GM12878 (cell line): ENCODE measurements at regions of chr9 and their contacts with region 1.

Region 1: DNA sequence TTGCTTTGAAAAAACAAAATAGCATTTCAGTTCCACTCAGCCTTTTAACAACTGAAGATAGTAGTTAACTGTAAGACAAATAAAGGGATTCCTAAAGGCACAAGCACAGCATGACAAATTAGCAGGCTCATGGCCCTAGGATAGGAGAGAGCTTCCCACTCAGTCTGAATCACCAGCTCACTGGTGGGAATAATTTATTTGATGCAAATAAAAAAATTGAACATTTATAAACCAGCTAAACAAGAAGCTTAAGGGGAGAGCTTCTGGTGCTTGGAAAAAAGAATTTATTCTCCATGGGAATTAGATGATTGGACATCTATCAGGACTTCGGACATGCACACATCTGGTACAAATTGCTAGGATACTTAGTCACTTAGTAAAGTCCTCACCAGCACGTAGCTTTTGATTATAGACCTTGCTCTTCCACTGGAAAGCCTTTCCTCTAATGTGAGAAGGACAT is 294.1 kb upstream of the TNC start:
- DNase-seq: no peak
- ATAC-seq: no peak
- H3K4me3 ChIP-seq: no peak overlapping the region
- H3K27ac ChIP-seq: no peak overlapping the region
- H3K4me1 ChIP-seq: no peaks in the 10 kb centered on the region
- H3K27me3 ChIP-seq: no peaks in the 10 kb centered on the region
- CTCF ChIP-seq: no peak
- EP300 ChIP-seq: no peak
- POLR2A ChIP-seq: no peak
- RAD21 ChIP-seq: no peak

Region 2: GRCh38 chr9:114691046-114691955 is 720.7 kb before region 1 on chr9:
- CTCF ChIA-PET with region 1: no interaction called
- POLR2A ChIA-PET with region 1: no interaction called
- RAD21 ChIA-PET with region 1: no interaction called
- SMC1A ChIA-PET with region 1: no interaction called
- in situ Hi-C with region 1: no loop called
- intact Hi-C with region 1: loop called (anchors 10 kb)
- DNase-seq: peak; percentile 36
- ATAC-seq: peak; percentile 88
- H3K4me3 ChIP-seq: no peak overlapping the region
- H3K27ac ChIP-seq: no peak overlapping the region
- H3K4me1 ChIP-seq: peaks cover 21% of the 10 kb centered on the region
- H3K27me3 ChIP-seq: peaks cover 0 to 10% of the 10 kb centered on the region in 2 experiments; a peak in 2 of 4 replicates
- CTCF ChIP-seq: no peak
- EP300 ChIP-seq: peak; percentile 48 to 53; a peak in 2 of 4 replicates
- POLR2A ChIP-seq: no peak
- RAD21 ChIP-seq: no peak

Region 3: GRCh38 chr9:115204904-115205453 is 207.0 kb before region 1 on chr9:
- CTCF ChIA-PET with region 1: interaction called, 4 read pairs
- POLR2A ChIA-PET with region 1: no interaction called
- RAD21 ChIA-PET with region 1: interaction called, 3 read pairs
- SMC1A ChIA-PET with region 1: interaction called, 7 read pairs
- in situ Hi-C with region 1: no loop called
- intact Hi-C with region 1: loop called (anchors 5 kb)
- DNase-seq: no peak
- ATAC-seq: peak; percentile 72
- H3K4me3 ChIP-seq: no peak overlapping the region
- H3K27ac ChIP-seq: no peak overlapping the region
- H3K4me1 ChIP-seq: peaks cover 22% of the 10 kb centered on the region
- H3K27me3 ChIP-seq: no peaks in the 10 kb centered on the region
- CTCF ChIP-seq: no peak
- EP300 ChIP-seq: peak in 1 of 2 experiments; percentile 13; a peak in 1 of 4 replicates
- POLR2A ChIP-seq: no peak
- RAD21 ChIP-seq: no peak

Region 4: GRCh38 chr9:115211413-115212124 is 200.5 kb before region 1 on chr9:
- CTCF ChIA-PET with region 1: interaction called, 4 read pairs
- POLR2A ChIA-PET with region 1: interaction called, 3 read pairs
- RAD21 ChIA-PET with region 1: interaction called, 5 read pairs
- SMC1A ChIA-PET with region 1: interaction called, 10 read pairs
- in situ Hi-C with region 1: no loop called
- intact Hi-C with region 1: loop called (anchors 5 kb)
- DNase-seq: peak; percentile 68
- ATAC-seq: peak; percentile 76
- H3K4me3 ChIP-seq: no peak overlapping the region
- H3K27ac ChIP-seq: peak overlapping the region; percentile 64
- H3K4me1 ChIP-seq: peaks cover 41% of the 10 kb centered on the region
- H3K27me3 ChIP-seq: no peaks in the 10 kb centered on the region
- CTCF ChIP-seq: no peak
- EP300 ChIP-seq: peak in 1 of 2 experiments; percentile 43; a peak in 1 of 4 replicates
- POLR2A ChIP-seq: peak; percentile 42; the same call in 1 of the 2 replicates
- RAD21 ChIP-seq: peak; percentile 18; the same call in 1 of the 2 replicates

Region 5: DNA sequence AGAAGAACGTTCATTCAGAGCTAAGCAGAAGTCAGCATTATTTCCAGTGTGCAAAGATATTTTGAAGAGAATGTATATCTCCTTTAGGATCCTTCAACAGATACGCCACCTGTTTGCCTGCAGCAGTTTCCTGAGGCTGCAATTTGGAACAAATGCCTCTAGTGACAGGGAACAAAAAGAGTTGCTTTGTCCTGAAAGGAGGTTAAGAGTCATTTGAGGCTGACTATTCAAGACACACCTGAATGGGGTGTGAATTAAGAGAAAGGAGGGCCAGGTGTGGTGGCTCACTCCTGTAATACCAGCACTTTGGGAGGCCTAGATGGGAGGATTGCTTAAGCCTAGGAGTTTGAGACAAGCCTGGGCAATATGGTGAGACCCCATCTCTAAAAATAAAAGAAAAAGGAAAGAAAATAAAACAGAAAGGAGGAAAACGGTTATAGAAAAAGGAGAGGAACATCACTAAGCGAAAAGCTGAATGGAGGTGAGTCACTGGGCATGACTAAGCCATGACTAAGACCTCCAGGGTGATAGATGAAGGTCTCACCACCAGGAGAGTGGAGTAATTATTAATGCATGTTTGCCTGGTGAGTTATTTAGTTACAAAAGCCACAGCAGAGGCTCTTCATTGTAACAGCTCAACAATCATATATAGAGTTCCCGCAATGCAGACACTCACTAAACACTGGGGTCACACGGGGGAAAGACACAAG is 38.9 kb before region 1 on chr9:
- CTCF ChIA-PET with region 1: interaction called, 3 read pairs
- POLR2A ChIA-PET with region 1: no interaction called
- RAD21 ChIA-PET with region 1: interaction called, 5 read pairs
- SMC1A ChIA-PET with region 1: interaction called, 14 read pairs
- in situ Hi-C with region 1: no loop called
- intact Hi-C with region 1: no loop called
- DNase-seq: peak; percentile 16
- ATAC-seq: peak; percentile 90
- H3K4me3 ChIP-seq: no peak overlapping the region
- H3K27ac ChIP-seq: no peak overlapping the region
- H3K4me1 ChIP-seq: no peaks in the 10 kb centered on the region
- H3K27me3 ChIP-seq: no peaks in the 10 kb centered on the region
- CTCF ChIP-seq: no peak
- EP300 ChIP-seq: no peak
- POLR2A ChIP-seq: no peak
- RAD21 ChIP-seq: no peak

Region 6: DNA sequence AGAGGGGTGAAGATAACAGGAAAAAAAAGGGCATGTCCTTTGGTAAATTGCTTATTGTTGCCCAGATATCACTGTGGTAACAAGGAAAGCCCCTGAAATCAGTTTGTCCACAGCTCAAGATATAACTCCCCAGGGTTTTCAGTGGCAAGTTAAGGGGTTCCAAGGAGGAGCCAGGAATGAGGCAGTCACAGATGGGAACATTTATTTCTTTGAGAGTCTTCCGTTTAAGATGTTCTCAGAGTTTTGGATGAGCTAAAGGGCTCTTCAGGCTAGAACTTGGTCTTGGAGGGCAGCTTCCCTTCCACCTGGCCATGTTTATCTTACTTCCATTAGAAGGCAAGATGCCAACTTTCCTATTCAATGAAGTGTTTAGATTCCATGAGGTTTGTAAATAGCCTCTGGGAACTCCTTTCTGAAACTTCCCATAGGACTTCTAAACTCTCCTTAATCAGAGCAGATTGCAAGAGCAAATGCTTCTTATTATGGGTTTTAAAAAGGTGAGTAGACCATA is 16.5 kb before region 1 on chr9:
- CTCF ChIA-PET with region 1: interaction called, 10 read pairs
- POLR2A ChIA-PET with region 1: interaction called, 3 read pairs
- RAD21 ChIA-PET with region 1: interaction called, 6 read pairs
- SMC1A ChIA-PET with region 1: interaction called, 20 read pairs
- in situ Hi-C with region 1: no loop called
- intact Hi-C with region 1: no loop called
- DNase-seq: no peak
- ATAC-seq: peak; percentile 39; the same call in 2 of the 3 replicates
- H3K4me3 ChIP-seq: no peak overlapping the region
- H3K27ac ChIP-seq: no peak overlapping the region
- H3K4me1 ChIP-seq: no peaks in the 10 kb centered on the region
- H3K27me3 ChIP-seq: no peaks in the 10 kb centered on the region
- CTCF ChIP-seq: no peak
- EP300 ChIP-seq: no peak
- POLR2A ChIP-seq: no peak
- RAD21 ChIP-seq: no peak

Region 7: DNA sequence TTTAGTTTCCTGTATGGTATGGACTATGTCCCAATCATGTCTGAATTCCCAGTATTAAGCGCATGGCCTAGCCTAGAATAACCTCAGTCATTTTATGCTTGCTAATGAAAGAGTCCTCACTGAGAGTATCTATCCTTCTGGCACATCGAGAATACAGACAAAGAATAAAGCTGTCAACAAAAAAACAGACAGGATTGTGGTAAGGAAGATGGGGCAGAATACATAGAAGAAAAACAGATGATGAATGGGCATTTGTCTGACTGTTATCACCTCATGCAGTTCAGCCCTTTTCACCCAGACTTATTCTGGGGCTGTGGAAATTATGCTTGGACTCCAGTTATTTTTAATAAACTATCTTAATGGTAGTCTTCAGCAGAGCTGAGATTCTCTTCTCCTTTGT is 69.7 kb after region 1 on chr9:
- CTCF ChIA-PET with region 1: no interaction called
- POLR2A ChIA-PET with region 1: no interaction called
- RAD21 ChIA-PET with region 1: no interaction called
- SMC1A ChIA-PET with region 1: no interaction called
- in situ Hi-C with region 1: no loop called
- intact Hi-C with region 1: no loop called
- DNase-seq: no peak
- ATAC-seq: no peak
- H3K4me3 ChIP-seq: no peak overlapping the region
- H3K27ac ChIP-seq: no peak overlapping the region
- H3K4me1 ChIP-seq: no peaks in the 10 kb centered on the region
- H3K27me3 ChIP-seq: peaks cover 0 to 2% of the 10 kb centered on the region in 2 experiments; a peak in 1 of 4 replicates
- CTCF ChIP-seq: no peak
- EP300 ChIP-seq: no peak
- POLR2A ChIP-seq: no peak
- RAD21 ChIP-seq: no peak

Region 8: GRCh38 chr9:115615821-115616665 is 204.0 kb after region 1 on chr9:
- CTCF ChIA-PET with region 1: no interaction called
- POLR2A ChIA-PET with region 1: no interaction called
- RAD21 ChIA-PET with region 1: no interaction called
- SMC1A ChIA-PET with region 1: no interaction called
- in situ Hi-C with region 1: no loop called
- intact Hi-C with region 1: no loop called
- DNase-seq: no peak
- ATAC-seq: no peak
- H3K4me3 ChIP-seq: no peak overlapping the region
- H3K27ac ChIP-seq: no peak overlapping the region
- H3K4me1 ChIP-seq: no peaks in the 10 kb centered on the region
- H3K27me3 ChIP-seq: no peaks in the 10 kb centered on the region
- CTCF ChIP-seq: no peak
- EP300 ChIP-seq: no peak
- POLR2A ChIP-seq: no peak
- RAD21 ChIP-seq: no peak